ENCODE measurements at regions of chr3 and their contacts with region 1.

Region 1: DNA sequence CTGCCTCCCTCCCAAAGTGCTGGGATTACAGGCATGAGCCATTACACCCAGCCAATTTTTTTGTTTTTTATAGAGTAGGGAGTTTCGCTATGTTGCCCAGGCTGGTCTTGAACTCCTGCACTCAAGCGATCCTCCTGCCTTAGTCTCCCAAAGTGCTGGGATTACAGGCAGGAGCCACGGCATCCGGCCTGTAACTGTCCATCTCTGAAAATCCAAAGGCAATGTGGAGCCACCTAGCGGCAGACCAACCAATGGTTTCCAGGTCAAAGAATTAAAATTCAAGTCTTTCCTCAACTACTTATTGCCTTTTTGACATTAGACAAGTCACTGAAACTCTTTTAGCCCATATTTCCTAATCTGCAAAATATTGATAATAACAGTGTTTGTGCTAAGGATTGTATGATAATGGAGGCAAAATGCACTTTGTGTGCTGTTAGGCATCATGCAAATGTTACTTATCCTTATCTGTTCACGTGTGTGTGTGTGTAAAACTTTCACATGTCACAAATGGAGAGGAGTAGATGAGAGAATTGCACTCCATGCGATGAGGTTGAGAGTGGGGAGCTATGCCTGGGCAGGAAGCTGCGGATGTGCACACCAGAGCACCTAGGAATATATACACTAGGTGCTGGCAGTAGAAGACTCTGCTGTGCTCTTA is 48.7 kb downstream of the COL8A1 start:
- DNase-seq: no peak
- ATAC-seq: peak; percentile 85
- H3K4me3 ChIP-seq: no peak overlapping the region
- H3K27ac ChIP-seq: no peak overlapping the region
- H3K4me1 ChIP-seq: no peaks in the 10 kb centered on the region
- H3K27me3 ChIP-seq: no peaks in the 10 kb centered on the region; a peak in 1 of 4 replicates
- CTCF ChIP-seq: peak; percentile 68 to 73 (median 70)
- EP300 ChIP-seq: no peak
- POLR2A ChIP-seq: no peak
- RAD21 ChIP-seq: peak; percentile 84

Region 2: GRCh38 chr3:99023590-99024192 is 663.4 kb before region 1 on chr3:
- CTCF ChIA-PET with region 1: interaction called, 8 read pairs
- POLR2A ChIA-PET with region 1: no interaction called
- RAD21 ChIA-PET with region 1: interaction called, 7 read pairs
- SMC1A ChIA-PET with region 1: interaction called, 6 read pairs
- in situ Hi-C with region 1: loop called (anchors 10 kb)
- intact Hi-C with region 1: loop called (anchors 2 kb)
- DNase-seq: no peak
- ATAC-seq: peak; percentile 60; the same call in 2 of the 3 replicates
- H3K4me3 ChIP-seq: no peak overlapping the region
- H3K27ac ChIP-seq: no peak overlapping the region
- H3K4me1 ChIP-seq: no peaks in the 10 kb centered on the region
- H3K27me3 ChIP-seq: no peaks in the 10 kb centered on the region
- CTCF ChIP-seq: peak; percentile 53 to 68 (median 60)
- EP300 ChIP-seq: no peak
- POLR2A ChIP-seq: no peak
- RAD21 ChIP-seq: peak; percentile 81

Region 3: DNA sequence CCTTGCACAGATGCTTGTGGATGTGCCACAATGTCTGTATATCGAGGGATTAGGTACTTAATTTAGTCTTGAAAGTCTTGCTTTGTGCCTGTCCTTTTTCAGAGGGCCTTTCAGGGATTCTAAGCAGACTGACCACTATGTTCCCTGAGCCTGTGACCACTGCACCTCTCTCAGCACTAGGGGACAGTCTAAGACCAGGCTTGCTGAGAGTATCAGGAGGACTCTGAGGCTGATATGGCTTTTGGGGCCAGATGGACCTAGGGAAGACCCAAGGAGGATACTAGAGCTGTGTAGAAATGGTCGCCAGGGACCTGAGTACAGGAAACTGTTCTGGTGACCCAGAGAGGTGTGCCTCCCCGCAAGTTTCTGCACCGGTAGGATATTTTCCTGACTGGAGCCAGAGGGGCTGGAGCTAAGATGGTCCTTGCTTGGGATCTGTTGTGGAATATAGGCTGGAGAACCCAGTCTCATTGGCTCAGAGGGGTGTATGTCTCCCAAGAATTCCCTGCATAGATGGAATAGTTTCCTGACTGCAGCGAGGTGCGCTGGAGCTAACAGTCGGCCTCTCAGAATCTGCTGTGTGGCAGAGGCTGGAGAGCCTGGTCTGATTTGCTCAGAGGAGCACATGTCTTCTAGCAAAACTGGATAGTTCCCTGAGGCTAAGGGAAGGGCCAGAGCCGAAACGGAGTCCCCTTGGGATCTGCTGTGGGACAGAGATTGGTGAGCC is 572.4 kb before region 1 on chr3:
- CTCF ChIA-PET with region 1: interaction called, 3 read pairs
- POLR2A ChIA-PET with region 1: no interaction called
- RAD21 ChIA-PET with region 1: no interaction called
- SMC1A ChIA-PET with region 1: no interaction called
- in situ Hi-C with region 1: no loop called
- intact Hi-C with region 1: loop called (anchors 10 kb)
- DNase-seq: no peak
- ATAC-seq: peak; percentile 87
- H3K4me3 ChIP-seq: no peak overlapping the region
- H3K27ac ChIP-seq: no peak overlapping the region
- H3K4me1 ChIP-seq: no peaks in the 10 kb centered on the region
- H3K27me3 ChIP-seq: no peaks in the 10 kb centered on the region
- CTCF ChIP-seq: peak; percentile 34 to 72 (median 61); a peak in 5 of 6 replicates
- EP300 ChIP-seq: no peak
- POLR2A ChIP-seq: no peak
- RAD21 ChIP-seq: peak; percentile 98

Region 4: GRCh38 chr3:99499235-99500158 is 187.6 kb before region 1 on chr3:
- CTCF ChIA-PET with region 1: interaction called, 15 read pairs
- POLR2A ChIA-PET with region 1: no interaction called
- RAD21 ChIA-PET with region 1: interaction called, 3 read pairs
- SMC1A ChIA-PET with region 1: interaction called, 4 read pairs
- in situ Hi-C with region 1: no loop called
- intact Hi-C with region 1: loop called (anchors 5 kb)
- DNase-seq: peak; percentile 16
- ATAC-seq: peak; percentile 87
- H3K4me3 ChIP-seq: no peak overlapping the region
- H3K27ac ChIP-seq: no peak overlapping the region
- H3K4me1 ChIP-seq: no peaks in the 10 kb centered on the region
- H3K27me3 ChIP-seq: no peaks in the 10 kb centered on the region
- CTCF ChIP-seq: peak; percentile 73 to 74 (median 74)
- EP300 ChIP-seq: no peak
- POLR2A ChIP-seq: no peak
- RAD21 ChIP-seq: peak; percentile 75

Region 5: GRCh38 chr3:99551520-99551919 is 135.6 kb before region 1 on chr3:
- CTCF ChIA-PET with region 1: interaction called, 5 read pairs
- POLR2A ChIA-PET with region 1: no interaction called
- RAD21 ChIA-PET with region 1: no interaction called
- SMC1A ChIA-PET with region 1: no interaction called
- in situ Hi-C with region 1: no loop called
- intact Hi-C with region 1: loop called (anchors 5 kb)
- DNase-seq: no peak
- ATAC-seq: no peak
- H3K4me3 ChIP-seq: no peak overlapping the region
- H3K27ac ChIP-seq: no peak overlapping the region
- H3K4me1 ChIP-seq: no peaks in the 10 kb centered on the region
- H3K27me3 ChIP-seq: no peaks in the 10 kb centered on the region
- CTCF ChIP-seq: no peak
- EP300 ChIP-seq: no peak
- POLR2A ChIP-seq: no peak
- RAD21 ChIP-seq: no peak

Region 6: GRCh38 chr3:99645277-99646106 is 41.6 kb before region 1 on chr3:
- CTCF ChIA-PET with region 1: interaction called, 78 read pairs
- POLR2A ChIA-PET with region 1: interaction called, 4 read pairs
- RAD21 ChIA-PET with region 1: interaction called, 9 read pairs
- SMC1A ChIA-PET with region 1: interaction called, 12 read pairs
- in situ Hi-C with region 1: no loop called
- intact Hi-C with region 1: no loop called
- DNase-seq: no peak
- ATAC-seq: peak; percentile 70
- H3K4me3 ChIP-seq: no peak overlapping the region
- H3K27ac ChIP-seq: no peak overlapping the region
- H3K4me1 ChIP-seq: no peaks in the 10 kb centered on the region
- H3K27me3 ChIP-seq: peaks cover 0 to 2% of the 10 kb centered on the region in 2 experiments; a peak in 1 of 4 replicates
- CTCF ChIP-seq: peak; percentile 28 to 69 (median 68)
- EP300 ChIP-seq: no peak
- POLR2A ChIP-seq: no peak
- RAD21 ChIP-seq: peak; percentile 45

Region 7: GRCh38 chr3:99668044-99668443 is 19.0 kb before region 1 on chr3:
- CTCF ChIA-PET with region 1: interaction called, 17 read pairs
- POLR2A ChIA-PET with region 1: no interaction called
- RAD21 ChIA-PET with region 1: interaction called, 3 read pairs
- SMC1A ChIA-PET with region 1: interaction called, 5 read pairs
- in situ Hi-C with region 1: no loop called
- intact Hi-C with region 1: no loop called
- DNase-seq: no peak
- ATAC-seq: no peak
- H3K4me3 ChIP-seq: no peak overlapping the region
- H3K27ac ChIP-seq: no peak overlapping the region
- H3K4me1 ChIP-seq: no peaks in the 10 kb centered on the region
- H3K27me3 ChIP-seq: no peaks in the 10 kb centered on the region; a peak in 1 of 4 replicates
- CTCF ChIP-seq: no peak
- EP300 ChIP-seq: no peak
- POLR2A ChIP-seq: no peak
- RAD21 ChIP-seq: no peak

Region 8: GRCh38 chr3:99708207-99708745 is 21.2 kb after region 1 on chr3:
- CTCF ChIA-PET with region 1: no interaction called
- POLR2A ChIA-PET with region 1: no interaction called
- RAD21 ChIA-PET with region 1: no interaction called
- SMC1A ChIA-PET with region 1: no interaction called
- in situ Hi-C with region 1: no loop called
- intact Hi-C with region 1: no loop called
- DNase-seq: no peak
- ATAC-seq: no peak
- H3K4me3 ChIP-seq: no peak overlapping the region
- H3K27ac ChIP-seq: no peak overlapping the region
- H3K4me1 ChIP-seq: no peaks in the 10 kb centered on the region
- H3K27me3 ChIP-seq: no peaks in the 10 kb centered on the region; a peak in 1 of 4 replicates
- CTCF ChIP-seq: no peak
- EP300 ChIP-seq: no peak
- POLR2A ChIP-seq: no peak
- RAD21 ChIP-seq: no peak

Region 9: DNA sequence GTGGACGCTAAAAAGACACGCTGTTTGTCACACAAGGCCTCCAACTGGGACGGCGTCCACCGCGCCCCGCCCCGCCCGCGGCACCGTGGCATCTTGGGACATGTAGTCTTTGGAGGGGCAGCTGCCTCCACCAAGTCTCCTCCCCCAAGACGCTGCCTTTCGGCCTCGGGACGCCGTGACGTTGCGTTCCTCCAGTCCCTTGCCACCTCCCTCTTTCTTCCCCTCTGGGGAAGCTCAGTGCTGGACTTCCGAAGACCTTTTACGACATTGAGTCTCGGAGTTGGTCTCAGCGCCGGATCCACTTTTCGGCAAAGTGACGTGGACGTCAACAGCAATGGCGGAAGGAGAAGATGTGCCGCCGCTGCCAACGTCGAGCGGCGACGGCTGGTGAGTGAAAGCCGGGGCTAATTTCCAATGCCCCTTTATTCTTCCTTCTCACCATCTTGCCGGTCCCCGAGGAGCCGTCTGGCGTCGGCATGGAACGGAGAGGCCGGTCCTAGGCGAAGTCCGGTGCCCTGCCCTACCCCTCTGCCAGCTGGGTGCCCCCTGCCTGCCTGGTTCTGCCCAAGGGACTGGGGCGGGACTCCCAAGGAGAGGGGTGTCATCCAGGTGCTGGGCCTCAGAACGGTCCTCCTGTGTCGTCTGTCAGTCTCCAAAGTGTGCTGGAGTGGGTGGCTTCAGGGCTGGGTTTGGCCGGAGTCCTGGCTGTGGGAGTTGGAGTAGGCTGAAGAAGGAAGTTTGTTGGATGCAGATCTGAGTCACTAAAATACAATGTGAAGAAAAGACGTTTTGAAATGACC is 573.8 kb after region 1 on chr3 and contains the start of gene TBC1D23:
- CTCF ChIA-PET with region 1: no interaction called
- POLR2A ChIA-PET with region 1: no interaction called
- RAD21 ChIA-PET with region 1: no interaction called
- SMC1A ChIA-PET with region 1: no interaction called
- in situ Hi-C with region 1: no loop called
- intact Hi-C with region 1: no loop called
- DNase-seq: peak; percentile 98
- ATAC-seq: peak; percentile 99
- H3K4me3 ChIP-seq: peak within 1 kb of the TSS; percentile 95
- H3K27ac ChIP-seq: peak within 1 kb of the TSS; percentile 84
- H3K4me1 ChIP-seq: no peaks in the 10 kb centered on the region
- H3K27me3 ChIP-seq: no peaks in the 10 kb centered on the region
- CTCF ChIP-seq: no peak
- EP300 ChIP-seq: no peak
- POLR2A ChIP-seq: peak; percentile 87
- RAD21 ChIP-seq: no peak
- polyA plus RNA-seq, gene TBC1D23: 13.5 to 16.2 TPM

Measured in GM12878 (cell line).